ENCODE measurements at regions of chr10 and their contacts with region 1.

Region 1: GRCh38 chr10:58513188-58514110 is 777 bp downstream of the BICC1 start:
- DNase-seq: peak; percentile 71
- ATAC-seq: peak; percentile 42
- H3K4me3 ChIP-seq: peak overlapping the region; percentile 72
- H3K27ac ChIP-seq: peak overlapping the region; percentile 4; the same call in 1 of the 2 replicates
- H3K4me1 ChIP-seq: peaks cover 22% of the 10 kb centered on the region; the same call in 1 of the 2 replicates
- H3K27me3 ChIP-seq: peaks cover 46% of the 10 kb centered on the region
- CTCF ChIP-seq: no peak

Region 2: DNA sequence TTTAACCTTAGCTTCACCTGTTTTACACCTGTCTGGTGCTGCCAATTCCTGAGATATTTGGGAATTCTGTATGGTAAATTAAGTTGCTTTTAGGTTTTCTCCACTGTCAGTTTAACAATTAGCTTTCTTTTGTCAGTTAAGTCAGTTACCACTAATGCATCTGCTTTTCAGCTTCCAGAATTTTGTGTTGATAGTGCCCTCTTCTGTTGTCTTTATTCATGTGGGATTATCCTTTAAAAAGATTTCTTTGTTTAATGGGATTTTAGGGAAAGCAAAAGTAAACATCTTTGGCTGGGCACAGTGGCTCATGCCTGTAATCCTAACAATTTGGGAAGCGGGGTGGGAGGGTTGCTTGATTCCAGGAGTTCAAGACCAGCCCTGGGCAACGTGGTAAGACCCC is 120.1 kb before region 1 on chr10:
- CTCF ChIA-PET with region 1: no interaction called
- POLR2A ChIA-PET with region 1: interaction called, 30 read pairs
- intact Hi-C with region 1: no loop called
- DNase-seq: peak; percentile 30
- ATAC-seq: peak; percentile 71
- H3K4me3 ChIP-seq: no peak overlapping the region
- H3K27ac ChIP-seq: no peak overlapping the region
- H3K4me1 ChIP-seq: no peaks in the 10 kb centered on the region
- H3K27me3 ChIP-seq: no peaks in the 10 kb centered on the region
- CTCF ChIP-seq: peak; percentile 45; the same call in 1 of the 2 replicates

Region 3: GRCh38 chr10:58608351-58608750 is 94.9 kb after region 1 on chr10:
- CTCF ChIA-PET with region 1: no interaction called
- POLR2A ChIA-PET with region 1: no interaction called
- intact Hi-C with region 1: no loop called
- DNase-seq: no peak
- ATAC-seq: no peak
- H3K4me3 ChIP-seq: no peak overlapping the region
- H3K27ac ChIP-seq: no peak overlapping the region
- H3K4me1 ChIP-seq: no peaks in the 10 kb centered on the region
- H3K27me3 ChIP-seq: 0 out of 2 replicates have a peak, but pooled peaks cover 4% of the 10 kb centered on the region
- CTCF ChIP-seq: no peak

Measured in PC-3 (cell line).